ENCODE measurements at regions of chr4 and their contacts with region 1.

Region 1: GRCh38 chr4:61853041-61853440 is 652.9 kb downstream of the ADGRL3 start:
- DNase-seq: no peak
- H3K4me3 ChIP-seq: no peak overlapping the region
- H3K27ac ChIP-seq: no peak overlapping the region
- H3K4me1 ChIP-seq: no peaks in the 10 kb centered on the region
- H3K27me3 ChIP-seq: no peaks in the 10 kb centered on the region
- CTCF ChIP-seq: no peak
- POLR2A ChIP-seq: no peak

Region 2: DNA sequence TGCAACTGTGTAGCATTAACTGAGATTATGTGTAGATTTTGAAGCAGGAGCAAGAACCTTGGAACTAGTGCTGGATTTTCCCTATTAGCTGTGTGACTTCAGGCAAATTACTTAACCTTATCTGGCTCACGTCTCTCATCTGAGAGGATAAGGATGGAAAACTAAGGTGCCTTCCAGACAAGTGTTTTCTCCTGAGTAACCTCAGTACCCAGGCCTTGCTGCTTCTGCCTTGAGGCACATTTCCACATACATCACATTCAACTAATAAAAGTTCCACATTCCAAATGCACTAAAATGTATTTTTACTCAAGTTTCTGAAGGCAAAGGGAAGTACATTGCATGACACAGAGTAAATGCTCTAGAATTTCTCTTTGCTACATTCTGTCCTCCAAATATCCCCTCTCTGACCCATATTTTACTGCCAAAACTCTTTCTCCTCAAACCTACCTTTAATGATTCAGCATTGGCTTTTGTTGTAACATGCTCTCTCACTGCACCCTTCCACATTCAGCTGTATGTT is 848.3 kb before region 1 on chr4:
- intact Hi-C with region 1: loop called (anchors 5 kb)
- DNase-seq: no peak
- H3K4me3 ChIP-seq: no peak overlapping the region
- H3K27ac ChIP-seq: no peak overlapping the region
- H3K4me1 ChIP-seq: no peaks in the 10 kb centered on the region
- H3K27me3 ChIP-seq: no peaks in the 10 kb centered on the region
- CTCF ChIP-seq: no peak
- POLR2A ChIP-seq: no peak

Region 3: DNA sequence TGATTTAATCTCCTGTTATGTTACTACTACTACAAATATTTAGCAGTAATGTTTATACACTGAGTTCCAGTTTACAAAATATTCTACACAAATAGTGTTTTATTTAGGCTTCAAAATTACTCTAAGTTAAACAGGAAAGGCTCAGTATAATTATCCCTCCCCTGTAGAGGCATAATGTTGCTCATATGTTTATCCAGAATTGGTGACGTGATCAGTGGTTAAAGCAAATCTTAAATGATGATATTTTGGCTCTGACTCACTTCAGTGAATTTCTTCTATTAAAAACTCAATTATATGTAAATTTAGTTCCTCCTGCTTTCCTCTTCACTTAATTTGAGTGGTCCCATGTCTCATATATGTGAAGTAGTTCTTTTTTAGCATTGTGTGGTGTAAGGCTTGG is 214.4 kb before region 1 on chr4:
- intact Hi-C with region 1: no loop called
- DNase-seq: no peak
- H3K4me3 ChIP-seq: no peak overlapping the region
- H3K27ac ChIP-seq: no peak overlapping the region
- H3K4me1 ChIP-seq: no peaks in the 10 kb centered on the region
- H3K27me3 ChIP-seq: no peaks in the 10 kb centered on the region
- CTCF ChIP-seq: no peak
- POLR2A ChIP-seq: no peak